ENCODE measurements at regions of chr1 and their contacts with region 1.

Region 1: GRCh38 chr1:17125756-17126237 is 6.5 kb upstream of the PADI2 start:
- DNase-seq: peak; percentile 96
- ATAC-seq: peak; percentile 84
- H3K4me3 Mint-ChIP-seq: no peak overlapping the region
- H3K27ac Mint-ChIP-seq: peak overlapping the region; percentile 79; the same call in 1 of the 2 replicates
- H3K4me1 Mint-ChIP-seq: peaks cover 39% of the 10 kb centered on the region
- H3K27me3 Mint-ChIP-seq: peaks cover 7% of the 10 kb centered on the region; the same call in 1 of the 2 replicates
- CTCF ChIP-seq: peak; percentile 96

Region 2: GRCh38 chr1:17039522-17039921 is 86.3 kb before region 1 on chr1:
- CTCF ChIA-PET with region 1: no interaction called
- POLR2A ChIA-PET with region 1: no interaction called
- DNase-seq: no peak
- ATAC-seq: no peak
- H3K4me3 Mint-ChIP-seq: no peak overlapping the region
- H3K27ac Mint-ChIP-seq: no peak overlapping the region
- H3K4me1 Mint-ChIP-seq: peaks cover 4% of the 10 kb centered on the region; the same call in 1 of the 2 replicates
- H3K27me3 Mint-ChIP-seq: no peaks in the 10 kb centered on the region
- CTCF ChIP-seq: no peak

Region 3: DNA sequence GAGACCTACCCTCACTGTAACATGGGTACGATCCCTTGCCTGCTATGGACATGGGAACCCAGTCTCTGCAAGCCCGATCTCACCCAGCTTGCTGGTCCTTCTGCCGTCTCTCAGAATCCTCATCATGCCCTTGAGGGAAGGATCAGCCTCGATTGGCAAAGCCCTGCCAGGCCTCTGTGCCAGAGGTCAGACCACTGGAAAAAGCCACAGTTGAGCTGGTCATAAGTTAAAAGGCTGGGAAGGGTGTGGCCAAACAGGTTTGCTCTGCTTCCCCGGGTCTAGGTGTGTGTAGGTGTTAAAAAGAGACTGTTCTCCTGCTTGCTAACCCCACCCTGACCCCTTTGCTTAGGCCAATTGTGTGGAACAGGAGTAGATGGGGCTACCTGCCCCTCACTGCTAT is 103.6 kb after region 1 on chr1:
- CTCF ChIA-PET with region 1: interaction called, 53 read pairs
- POLR2A ChIA-PET with region 1: no interaction called
- DNase-seq: no peak
- ATAC-seq: no peak
- H3K4me3 Mint-ChIP-seq: no peak overlapping the region
- H3K27ac Mint-ChIP-seq: no peak overlapping the region
- H3K4me1 Mint-ChIP-seq: peaks cover 13% of the 10 kb centered on the region
- H3K27me3 Mint-ChIP-seq: peaks cover 3% of the 10 kb centered on the region; the same call in 1 of the 2 replicates
- CTCF ChIP-seq: no peak

Measured in WTC11 (cell line).